ENCODE measurements at regions of chr2 and their contacts with region 1.

Region 1: DNA sequence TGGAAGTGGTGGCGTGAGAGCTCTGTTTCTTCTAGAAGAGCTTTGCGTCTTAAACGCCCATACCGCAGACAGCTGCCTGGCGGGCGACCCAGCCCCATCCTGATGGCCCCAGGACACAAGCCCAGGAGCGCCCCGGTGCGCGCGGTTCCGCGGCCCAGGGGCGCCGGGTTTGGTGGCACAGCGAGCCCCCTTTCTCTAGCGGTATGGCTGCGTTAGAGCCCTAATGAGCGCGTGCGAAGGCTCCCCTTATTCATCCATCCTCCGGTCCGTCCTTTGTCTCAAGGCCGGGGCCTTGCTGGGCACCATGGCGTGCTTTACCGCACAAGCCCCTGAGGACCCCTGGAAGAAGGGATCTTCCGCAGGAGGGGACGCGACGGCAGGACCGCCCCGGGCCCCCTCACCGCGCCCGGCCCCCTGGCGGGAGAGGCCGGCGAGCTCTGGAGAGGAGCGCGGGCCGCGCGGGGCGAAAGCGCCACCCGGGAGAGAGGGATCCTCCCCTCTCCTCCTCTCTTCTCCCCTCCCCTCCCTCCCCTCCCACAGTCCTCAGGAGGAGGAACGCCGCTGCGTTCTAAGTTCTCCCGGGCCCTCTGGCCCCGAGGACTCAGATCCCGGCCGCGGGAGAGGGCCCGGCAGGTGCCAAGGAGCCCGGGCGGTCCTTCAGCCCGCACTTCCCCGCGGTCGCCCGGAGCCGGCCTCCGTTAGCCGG is 626 bp upstream of the SLC1A4 start:
- DNase-seq: peak; percentile 81
- H3K4me3 Mint-ChIP-seq: peak overlapping the region; percentile 59
- H3K27ac Mint-ChIP-seq: peak overlapping the region; percentile 65
- H3K4me1 Mint-ChIP-seq: peaks cover 54% of the 10 kb centered on the region
- H3K27me3 Mint-ChIP-seq: peaks cover 5% of the 10 kb centered on the region

Region 2: DNA sequence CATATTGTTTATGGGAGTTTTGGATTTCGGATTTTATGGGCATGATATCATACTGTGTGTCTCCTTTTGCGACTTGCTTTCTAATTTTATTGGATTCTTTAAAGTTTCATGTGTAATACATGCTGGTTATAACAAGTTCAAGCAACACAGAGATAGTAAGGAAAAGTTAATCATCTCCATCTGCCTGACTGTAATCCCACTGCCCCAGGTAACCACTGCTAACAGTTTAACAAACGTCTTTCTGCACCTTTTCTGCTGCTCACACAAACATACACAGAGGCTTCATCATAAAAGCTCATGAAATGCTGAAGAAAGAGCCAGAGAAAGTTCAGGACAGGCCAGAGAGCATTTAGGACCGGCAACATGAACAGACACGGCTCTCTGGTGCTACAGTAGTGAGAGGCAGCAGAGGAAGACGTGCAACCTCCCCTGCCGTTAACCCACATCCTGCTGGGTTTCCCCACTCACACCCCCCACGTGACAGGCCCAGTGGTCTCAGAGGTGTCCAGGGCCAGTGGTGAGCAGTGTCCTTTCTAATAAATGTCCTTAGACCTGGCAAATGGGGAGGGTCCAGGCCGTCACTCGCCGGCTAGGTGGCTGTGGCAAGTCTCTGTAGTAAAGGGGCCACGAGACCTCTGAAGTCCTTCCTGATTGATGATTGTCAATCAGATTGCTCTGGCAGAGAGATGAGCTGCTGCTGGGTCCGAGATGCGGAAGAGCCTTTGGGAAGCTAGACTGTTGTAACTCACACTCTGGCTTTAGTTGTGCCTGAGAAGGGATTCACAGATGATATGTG is 42.4 kb before region 1 on chr2:
- CTCF ChIA-PET with region 1: interaction called, 3 read pairs
- POLR2A ChIA-PET with region 1: interaction called, 6 read pairs
- intact Hi-C with region 1: loop called (anchors 1 kb)
- DNase-seq: peak; percentile 83
- H3K4me3 Mint-ChIP-seq: peak overlapping the region; percentile 61
- H3K27ac Mint-ChIP-seq: peak overlapping the region; percentile 47
- H3K4me1 Mint-ChIP-seq: peaks cover 27% of the 10 kb centered on the region
- H3K27me3 Mint-ChIP-seq: no peaks in the 10 kb centered on the region

Region 3: DNA sequence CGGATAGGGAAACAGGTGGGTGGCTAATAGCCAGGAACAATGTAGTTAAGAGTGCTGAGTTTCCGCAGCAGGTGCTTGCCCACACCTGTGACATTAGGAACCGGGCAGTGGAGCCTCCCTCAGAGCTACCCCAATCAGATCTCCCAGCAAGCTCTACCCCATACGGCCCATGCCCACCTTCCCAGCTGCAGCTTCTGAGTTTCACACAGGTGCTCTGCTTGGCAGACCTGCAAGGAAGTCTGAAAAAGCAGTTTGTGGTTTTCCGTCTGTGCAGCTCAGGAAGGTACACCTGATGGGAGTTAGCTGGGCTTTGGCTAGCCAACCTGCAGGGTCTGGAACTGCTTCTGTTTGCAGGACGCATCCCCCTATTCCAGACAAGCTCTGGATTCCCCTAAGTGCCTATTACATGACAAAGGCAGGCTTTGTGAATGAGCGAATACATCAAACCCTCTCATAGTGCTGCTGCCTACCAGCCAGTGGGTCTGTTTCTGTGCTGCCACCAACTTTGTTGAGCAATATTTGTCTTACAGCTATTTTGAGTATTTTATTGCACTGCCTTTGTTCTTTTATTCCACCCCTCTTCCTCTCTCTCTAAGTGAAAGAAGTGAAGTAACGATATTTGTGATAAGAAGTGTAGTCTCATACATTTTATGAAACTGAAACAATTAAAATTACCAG is 42.9 kb after region 1 on chr2:
- CTCF ChIA-PET with region 1: no interaction called
- POLR2A ChIA-PET with region 1: no interaction called
- intact Hi-C with region 1: loop called (anchors 2 kb)
- DNase-seq: peak; percentile 13
- H3K4me3 Mint-ChIP-seq: no peak overlapping the region
- H3K27ac Mint-ChIP-seq: no peak overlapping the region
- H3K4me1 Mint-ChIP-seq: peaks cover 23% of the 10 kb centered on the region
- H3K27me3 Mint-ChIP-seq: no peaks in the 10 kb centered on the region

Region 4: GRCh38 chr2:65040400-65041261 is 52.1 kb after region 1 on chr2:
- CTCF ChIA-PET with region 1: no interaction called
- POLR2A ChIA-PET with region 1: no interaction called
- intact Hi-C with region 1: loop called (anchors 2 kb)
- DNase-seq: peak; percentile 85
- H3K4me3 Mint-ChIP-seq: peak overlapping the region; percentile 28
- H3K27ac Mint-ChIP-seq: no peak overlapping the region
- H3K4me1 Mint-ChIP-seq: peaks cover 6% of the 10 kb centered on the region
- H3K27me3 Mint-ChIP-seq: no peaks in the 10 kb centered on the region

Region 5: GRCh38 chr2:65129826-65130663 is 141.5 kb after region 1 on chr2 and contains the start of gene RAB1A:
- CTCF ChIA-PET with region 1: no interaction called
- POLR2A ChIA-PET with region 1: no interaction called
- intact Hi-C with region 1: loop called (anchors 1 kb)
- DNase-seq: peak; percentile 100
- H3K4me3 Mint-ChIP-seq: peak within 1 kb of the TSS; percentile 96
- H3K27ac Mint-ChIP-seq: peak within 1 kb of the TSS; percentile 95
- H3K4me1 Mint-ChIP-seq: peaks cover 34% of the 10 kb centered on the region
- H3K27me3 Mint-ChIP-seq: no peaks in the 10 kb centered on the region
- total RNA-seq, gene RAB1A: 84.3 to 84.5 TPM

Region 6: DNA sequence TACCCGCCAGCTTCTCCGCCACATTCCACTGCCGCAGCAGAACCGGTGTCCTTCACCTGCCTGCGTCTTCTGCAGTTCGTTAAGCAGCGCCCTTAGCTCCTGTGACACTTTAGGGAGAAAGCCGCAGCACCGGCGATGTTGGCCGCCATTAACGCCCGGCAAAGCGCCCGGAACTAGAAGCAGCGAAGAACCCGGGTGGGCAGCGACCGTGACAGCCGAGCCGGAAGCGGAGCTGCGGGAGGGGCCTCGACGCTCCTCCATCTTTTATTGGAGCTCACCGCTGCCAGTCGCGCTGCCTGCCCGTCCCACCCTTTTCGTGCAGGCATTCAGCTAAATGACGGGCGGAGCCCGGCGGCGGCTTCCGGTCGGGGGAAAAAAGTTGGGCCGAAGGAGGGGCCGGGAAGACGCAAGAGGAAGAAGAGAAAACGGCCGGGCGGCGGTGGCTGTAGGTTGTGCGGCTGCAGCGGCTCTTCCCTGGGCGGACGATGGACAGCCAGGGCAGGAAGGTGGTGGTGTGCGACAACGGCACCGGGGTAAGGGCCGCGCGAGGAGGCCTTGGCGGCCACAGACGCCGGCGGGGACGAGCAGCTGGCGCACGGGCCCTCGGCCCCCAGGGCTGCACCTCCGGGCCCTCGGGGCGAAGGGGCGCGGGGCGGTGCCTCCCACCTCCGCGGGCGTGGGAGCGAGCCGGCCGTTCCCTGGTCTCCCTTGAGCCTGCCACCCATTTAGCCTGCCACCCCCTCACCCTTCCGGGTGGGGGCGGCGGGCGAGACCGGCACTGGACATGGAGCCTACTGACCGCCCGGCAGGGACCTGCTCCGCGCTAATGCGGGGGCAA is 239.1 kb after region 1 on chr2 and contains the start of gene ACTR2:
- CTCF ChIA-PET with region 1: no interaction called
- POLR2A ChIA-PET with region 1: interaction called, 6 read pairs
- intact Hi-C with region 1: loop called (anchors 2 kb)
- DNase-seq: peak; percentile 97
- H3K4me3 Mint-ChIP-seq: peak within 1 kb of the TSS; percentile 100
- H3K27ac Mint-ChIP-seq: peak within 1 kb of the TSS; percentile 99
- H3K4me1 Mint-ChIP-seq: peaks cover 32% of the 10 kb centered on the region
- H3K27me3 Mint-ChIP-seq: no peaks in the 10 kb centered on the region
- total RNA-seq, gene ACTR2: 401 to 406 TPM

Region 7: DNA sequence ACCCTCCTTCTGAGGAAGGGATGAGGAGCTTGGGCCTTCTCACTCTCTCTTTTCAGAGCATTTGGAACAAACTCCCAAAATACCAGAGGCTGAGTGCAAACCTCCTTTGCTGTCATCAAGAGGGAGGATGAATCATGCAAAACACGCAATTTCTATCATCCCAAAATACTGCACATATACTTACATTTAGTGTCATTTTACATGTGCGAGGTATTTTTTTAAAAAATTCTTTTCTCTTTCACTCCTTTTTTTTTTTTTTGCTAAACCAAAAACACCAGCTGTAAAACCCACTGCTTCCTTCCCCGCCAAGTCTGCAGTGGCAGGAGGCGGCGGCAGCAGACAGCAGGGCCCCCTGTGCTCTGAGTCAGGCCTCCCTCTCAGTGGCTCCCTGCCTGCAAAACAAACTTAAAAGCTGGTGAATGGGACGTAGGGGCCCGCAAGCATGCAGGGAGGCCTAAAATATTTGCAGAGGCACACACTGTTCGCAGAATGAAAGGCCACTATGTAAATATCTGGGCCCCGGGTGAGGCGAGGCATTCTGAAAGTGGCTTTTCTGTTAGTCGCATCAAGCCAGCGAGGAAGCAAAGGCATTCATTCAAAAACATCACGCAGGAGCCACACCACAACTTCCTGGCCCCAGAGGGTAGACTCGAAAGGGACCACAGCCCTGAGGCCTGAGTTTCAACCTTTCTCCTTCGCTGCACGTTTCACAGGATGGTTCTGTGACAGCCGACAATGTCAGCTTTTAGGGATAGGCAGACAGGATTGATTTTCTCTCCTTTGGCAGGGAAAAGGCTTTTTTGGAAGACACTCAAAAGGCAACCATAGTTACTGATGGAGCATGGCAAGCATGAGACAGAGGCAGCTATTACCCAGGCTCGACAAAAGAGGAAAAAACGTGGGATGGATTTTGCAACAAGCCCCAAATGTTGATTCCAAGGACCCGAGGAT is 312.5 kb after region 1 on chr2:
- CTCF ChIA-PET with region 1: no interaction called
- POLR2A ChIA-PET with region 1: no interaction called
- intact Hi-C with region 1: loop called (anchors 5 kb)
- DNase-seq: peak; percentile 87
- H3K4me3 Mint-ChIP-seq: peak overlapping the region; percentile 50
- H3K27ac Mint-ChIP-seq: peak overlapping the region; percentile 77
- H3K4me1 Mint-ChIP-seq: peaks cover 45% of the 10 kb centered on the region
- H3K27me3 Mint-ChIP-seq: peaks cover 15% of the 10 kb centered on the region